B cell (primary cell): ENCODE measurements at regions of chr22 and their contacts with region 1.

Region 1: GRCh38 chr22:42662114-42663021 is 13.2 kb upstream of the CYB5R3 start:
- DNase-seq: peak; percentile 86
- ATAC-seq: peak; percentile 60
- H3K4me3 ChIP-seq: peak overlapping the region; percentile 38 to 70 (median 70)
- H3K4me3 Mint-ChIP-seq: peak overlapping the region; percentile 83
- H3K27ac ChIP-seq: peak overlapping the region; percentile 16 to 28
- H3K27ac Mint-ChIP-seq: peak overlapping the region; percentile 50
- H3K4me1 ChIP-seq: peaks cover 18 to 43% of the 10 kb centered on the region in 2 donors
- H3K4me1 Mint-ChIP-seq: peaks cover 25% of the 10 kb centered on the region
- H3K27me3 ChIP-seq: no peaks in the 10 kb centered on the region
- H3K27me3 Mint-ChIP-seq: no peaks in the 10 kb centered on the region
- CTCF ChIP-seq: peak; percentile 88

Region 2: DNA sequence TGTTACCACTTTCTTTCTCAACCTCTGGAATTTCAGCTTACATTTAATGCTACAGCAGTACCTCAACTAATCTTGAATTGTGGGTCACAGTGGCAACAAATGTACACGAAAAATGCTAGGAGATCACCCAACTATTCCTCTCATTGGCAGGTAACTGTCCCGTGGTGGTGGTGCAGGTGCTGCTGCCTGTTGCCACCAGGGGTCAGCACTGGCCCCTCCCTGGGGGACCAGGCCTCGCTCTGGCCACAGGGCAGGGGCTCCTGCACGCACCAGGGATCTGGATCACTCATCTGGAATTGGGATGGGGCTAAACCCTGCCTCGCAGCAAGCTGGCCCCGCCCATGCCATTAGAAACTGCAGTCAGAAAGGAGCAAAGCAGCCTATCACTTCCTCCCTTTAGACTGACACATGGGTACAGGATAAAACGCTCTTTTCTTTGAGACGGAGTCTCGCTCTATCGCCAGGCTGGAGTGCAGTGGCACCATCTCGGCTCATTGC is 40.8 kb before region 1 on chr22:
- CTCF ChIA-PET with region 1: interaction called, 12 read pairs
- POLR2A ChIA-PET with region 1: no interaction called
- intact Hi-C with region 1: no loop called
- DNase-seq: peak; percentile 78
- ATAC-seq: peak; percentile 71
- H3K4me3 ChIP-seq: no peak overlapping the region
- H3K4me3 Mint-ChIP-seq: no peak overlapping the region
- H3K27ac ChIP-seq: no peak overlapping the region
- H3K27ac Mint-ChIP-seq: peak overlapping the region; percentile 83
- H3K4me1 ChIP-seq: peaks cover 18 to 37% of the 10 kb centered on the region in 2 donors
- H3K4me1 Mint-ChIP-seq: peaks cover 36% of the 10 kb centered on the region
- H3K27me3 ChIP-seq: no peaks in the 10 kb centered on the region
- H3K27me3 Mint-ChIP-seq: no peaks in the 10 kb centered on the region
- CTCF ChIP-seq: peak; percentile 80

Region 3: GRCh38 chr22:42717197-42717928 is 55.0 kb after region 1 on chr22:
- CTCF ChIA-PET with region 1: interaction called, 3 read pairs
- POLR2A ChIA-PET with region 1: no interaction called
- intact Hi-C with region 1: loop called (anchors 2 kb)
- DNase-seq: no peak
- ATAC-seq: peak; percentile 23
- H3K4me3 ChIP-seq: no peak overlapping the region
- H3K4me3 Mint-ChIP-seq: peak overlapping the region; percentile 28
- H3K27ac ChIP-seq: no peak overlapping the region
- H3K27ac Mint-ChIP-seq: peak overlapping the region; percentile 51
- H3K4me1 ChIP-seq: peaks cover 37 to 39% of the 10 kb centered on the region in 2 donors
- H3K4me1 Mint-ChIP-seq: peaks cover 48% of the 10 kb centered on the region
- H3K27me3 ChIP-seq: peaks cover 0 to 26% (median 10%) of the 10 kb centered on the region in 4 experiments
- H3K27me3 Mint-ChIP-seq: peaks cover 19% of the 10 kb centered on the region
- CTCF ChIP-seq: no peak

Region 4: DNA sequence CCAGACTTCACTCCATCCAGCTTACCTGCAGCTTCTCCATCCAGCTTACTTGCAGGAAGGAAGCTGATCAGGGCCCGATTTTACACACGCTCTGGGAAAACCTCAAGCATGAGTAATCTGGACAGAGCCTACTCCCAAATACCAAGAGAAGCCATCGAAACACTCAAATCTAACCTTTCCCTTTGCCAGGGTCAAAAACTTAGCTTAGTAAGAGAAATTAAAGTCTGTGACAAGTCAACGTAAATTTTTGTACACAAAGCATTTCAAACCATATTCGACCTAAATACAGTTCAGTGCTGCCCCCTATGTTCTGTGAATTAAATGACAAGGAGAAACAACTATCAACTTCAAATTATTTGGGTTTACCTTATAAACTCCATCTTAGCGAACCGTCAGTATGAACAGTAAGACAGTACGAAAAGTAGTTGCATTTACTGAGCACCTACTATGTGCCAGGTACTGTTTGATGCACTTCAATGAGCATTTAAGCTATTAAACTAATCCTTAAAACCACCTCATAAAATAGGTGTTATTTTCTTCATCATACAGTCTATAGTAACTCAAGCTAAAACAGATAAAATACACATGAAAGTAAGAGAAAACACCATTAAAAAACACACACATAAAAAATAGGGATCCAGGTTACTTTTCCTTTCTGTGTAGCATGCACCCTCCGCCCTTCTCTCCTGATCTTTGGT is 157.8 kb after region 1 on chr22:
- CTCF ChIA-PET with region 1: interaction called, 12 read pairs
- POLR2A ChIA-PET with region 1: no interaction called
- intact Hi-C with region 1: loop called (anchors 1 kb)
- DNase-seq: peak; percentile 70
- ATAC-seq: no peak
- H3K4me3 ChIP-seq: no peak overlapping the region
- H3K4me3 Mint-ChIP-seq: no peak overlapping the region
- H3K27ac ChIP-seq: no peak overlapping the region
- H3K27ac Mint-ChIP-seq: no peak overlapping the region
- H3K4me1 ChIP-seq: peaks cover 0 to 4% of the 10 kb centered on the region in 2 donors
- H3K4me1 Mint-ChIP-seq: peaks cover 4% of the 10 kb centered on the region
- H3K27me3 ChIP-seq: no peaks in the 10 kb centered on the region
- H3K27me3 Mint-ChIP-seq: no peaks in the 10 kb centered on the region
- CTCF ChIP-seq: peak; percentile 60

Region 5: GRCh38 chr22:42868751-42869251 is 206.4 kb after region 1 on chr22:
- CTCF ChIA-PET with region 1: interaction called, 26 read pairs
- POLR2A ChIA-PET with region 1: no interaction called
- intact Hi-C with region 1: loop called (anchors 1 kb)
- DNase-seq: no peak
- ATAC-seq: no peak
- H3K4me3 ChIP-seq: no peak overlapping the region
- H3K4me3 Mint-ChIP-seq: no peak overlapping the region
- H3K27ac ChIP-seq: no peak overlapping the region
- H3K27ac Mint-ChIP-seq: no peak overlapping the region
- H3K4me1 ChIP-seq: peaks cover 0 to 8% of the 10 kb centered on the region in 2 donors
- H3K4me1 Mint-ChIP-seq: peaks cover 9% of the 10 kb centered on the region
- H3K27me3 ChIP-seq: no peaks in the 10 kb centered on the region
- H3K27me3 Mint-ChIP-seq: no peaks in the 10 kb centered on the region
- CTCF ChIP-seq: no peak